ENCODE measurements at regions of chrX and their contacts with region 1.

Region 1: GRCh38 chrX:153927922-153928760 is 2.1 kb upstream of the ARHGAP4 start:
- DNase-seq: peak; percentile 96
- H3K4me3 Mint-ChIP-seq: peak overlapping the region; percentile 86
- H3K27ac Mint-ChIP-seq: peak overlapping the region; percentile 98
- H3K4me1 Mint-ChIP-seq: peaks cover 35% of the 10 kb centered on the region
- H3K27me3 Mint-ChIP-seq: no peaks in the 10 kb centered on the region

Region 2: GRCh38 chrX:153539171-153539978 is 388.8 kb before region 1 on chrX:
- CTCF ChIA-PET with region 1: no interaction called
- POLR2A ChIA-PET with region 1: no interaction called
- intact Hi-C with region 1: no loop called
- DNase-seq: peak; percentile 69
- H3K4me3 Mint-ChIP-seq: no peak overlapping the region
- H3K27ac Mint-ChIP-seq: no peak overlapping the region
- H3K4me1 Mint-ChIP-seq: no peaks in the 10 kb centered on the region
- H3K27me3 Mint-ChIP-seq: peaks cover 2% of the 10 kb centered on the region

Region 3: DNA sequence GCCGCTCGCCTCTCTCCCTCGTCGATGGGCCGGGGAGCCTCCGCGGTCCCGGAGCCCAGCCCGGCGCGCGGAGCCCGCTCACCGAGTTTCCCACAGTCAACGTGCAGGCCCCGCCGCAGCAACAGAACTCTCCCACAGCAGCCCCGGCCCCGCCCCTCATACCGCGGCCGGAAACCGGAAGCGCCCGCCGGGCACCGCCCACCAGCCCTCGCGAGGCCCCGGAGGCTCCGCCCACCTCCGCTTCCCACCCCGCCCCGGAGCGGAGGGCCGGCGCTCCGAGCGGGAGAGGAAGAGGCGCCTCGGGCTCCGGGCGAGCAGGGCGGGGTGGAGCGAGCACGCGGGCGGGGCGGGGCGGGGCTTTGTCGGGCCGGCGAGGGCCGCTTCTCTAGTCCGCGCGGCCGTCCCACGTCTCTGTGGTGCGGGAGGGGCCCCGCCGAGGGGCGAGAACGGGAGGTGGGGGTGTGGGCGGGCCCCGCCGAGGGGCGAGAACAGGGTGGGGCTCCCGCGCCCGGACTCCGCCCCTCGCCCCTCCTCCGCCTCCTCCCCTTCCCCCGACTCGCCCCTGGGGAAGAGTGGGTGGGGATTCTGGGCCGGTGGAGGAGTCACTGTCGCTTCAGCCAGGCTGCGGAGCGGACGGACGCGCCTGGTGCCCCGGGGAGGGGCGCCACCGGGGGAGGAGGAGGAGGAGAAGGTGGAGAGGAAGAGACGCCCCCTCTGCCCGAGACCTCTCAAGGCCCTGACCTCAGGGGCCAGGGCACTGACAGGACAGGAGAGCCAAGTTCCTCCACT is 203.7 kb before region 1 on chrX and contains the starts of genes ABCD1 and BCAP31:
- CTCF ChIA-PET with region 1: no interaction called
- POLR2A ChIA-PET with region 1: interaction called, 3 read pairs
- intact Hi-C with region 1: loop called (anchors 5 kb)
- DNase-seq: peak; percentile 91
- H3K4me3 Mint-ChIP-seq: peak within 1 kb of the TSS; percentile 86
- H3K27ac Mint-ChIP-seq: peak within 1 kb of the TSS; percentile 88
- H3K4me1 Mint-ChIP-seq: peaks cover 24% of the 10 kb centered on the region
- H3K27me3 Mint-ChIP-seq: no peaks in the 10 kb centered on the region
- total RNA-seq, gene ABCD1: 4.8 TPM
- total RNA-seq, gene BCAP31: 119 to 121 TPM

Region 4: DNA sequence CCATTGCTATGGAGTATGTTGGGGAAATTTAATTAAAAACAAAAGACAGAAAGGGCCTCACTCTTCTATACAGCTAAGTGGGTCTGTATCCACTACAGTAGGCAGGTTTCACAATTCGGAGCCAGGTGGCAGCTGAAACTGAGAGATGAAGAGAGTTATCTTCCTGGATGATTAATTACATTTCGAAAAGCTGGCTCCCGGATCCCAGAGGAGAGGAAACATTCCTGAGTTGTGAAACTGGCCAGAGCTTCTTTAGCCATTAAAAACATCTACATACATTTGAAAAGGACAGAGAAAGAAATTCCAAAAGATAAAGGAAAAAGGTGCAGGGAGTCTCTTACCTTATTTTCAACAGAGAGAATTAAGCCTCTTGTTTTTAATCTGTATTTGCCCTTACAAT is 82.3 kb before region 1 on chrX:
- CTCF ChIA-PET with region 1: no interaction called
- POLR2A ChIA-PET with region 1: no interaction called
- intact Hi-C with region 1: no loop called
- DNase-seq: no peak
- H3K4me3 Mint-ChIP-seq: no peak overlapping the region
- H3K27ac Mint-ChIP-seq: no peak overlapping the region
- H3K4me1 Mint-ChIP-seq: no peaks in the 10 kb centered on the region
- H3K27me3 Mint-ChIP-seq: peaks cover 6% of the 10 kb centered on the region

Region 5: DNA sequence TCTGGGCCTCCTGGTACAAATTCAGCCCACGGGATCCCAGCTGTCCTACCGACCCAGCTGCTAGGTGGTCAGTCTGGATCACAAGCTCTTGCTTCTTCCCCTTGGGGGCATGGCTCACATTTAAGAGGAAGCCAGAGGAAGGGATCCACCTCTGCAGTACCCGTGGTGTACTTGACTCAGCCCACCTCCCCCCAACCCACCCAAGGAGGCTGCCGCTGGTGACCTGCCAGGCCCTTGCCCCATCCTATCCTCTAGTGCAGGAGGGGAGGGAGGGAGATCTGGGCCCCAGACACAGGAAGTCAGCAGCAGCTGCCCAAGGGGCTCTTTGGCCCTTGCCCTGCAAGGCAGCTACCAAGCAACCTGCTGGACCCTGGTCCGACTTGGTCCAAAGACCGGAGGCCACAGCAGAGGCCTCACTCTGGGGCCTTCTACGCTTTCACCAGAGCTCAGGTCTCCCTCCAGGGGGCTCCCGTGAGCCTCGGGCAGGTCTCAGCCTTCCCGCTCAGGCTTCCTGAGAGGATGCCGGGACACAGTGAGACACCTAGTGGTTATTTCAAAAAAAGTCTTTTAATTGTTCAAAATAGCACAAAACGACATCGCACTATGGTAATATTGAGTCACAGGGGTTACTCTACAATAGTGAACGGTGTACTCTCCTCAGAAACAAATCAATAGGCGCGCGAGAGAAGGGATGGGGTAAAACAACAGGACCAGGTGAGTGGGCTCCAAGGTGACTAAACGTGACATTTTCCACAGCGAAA is 19.0 kb after region 1 on chrX:
- CTCF ChIA-PET with region 1: interaction called, 93 read pairs
- POLR2A ChIA-PET with region 1: interaction called, 21 read pairs
- intact Hi-C with region 1: loop called (anchors 2 kb)
- DNase-seq: peak; percentile 85
- H3K4me3 Mint-ChIP-seq: no peak overlapping the region
- H3K27ac Mint-ChIP-seq: peak overlapping the region; percentile 82
- H3K4me1 Mint-ChIP-seq: peaks cover 7% of the 10 kb centered on the region
- H3K27me3 Mint-ChIP-seq: no peaks in the 10 kb centered on the region

Region 6: DNA sequence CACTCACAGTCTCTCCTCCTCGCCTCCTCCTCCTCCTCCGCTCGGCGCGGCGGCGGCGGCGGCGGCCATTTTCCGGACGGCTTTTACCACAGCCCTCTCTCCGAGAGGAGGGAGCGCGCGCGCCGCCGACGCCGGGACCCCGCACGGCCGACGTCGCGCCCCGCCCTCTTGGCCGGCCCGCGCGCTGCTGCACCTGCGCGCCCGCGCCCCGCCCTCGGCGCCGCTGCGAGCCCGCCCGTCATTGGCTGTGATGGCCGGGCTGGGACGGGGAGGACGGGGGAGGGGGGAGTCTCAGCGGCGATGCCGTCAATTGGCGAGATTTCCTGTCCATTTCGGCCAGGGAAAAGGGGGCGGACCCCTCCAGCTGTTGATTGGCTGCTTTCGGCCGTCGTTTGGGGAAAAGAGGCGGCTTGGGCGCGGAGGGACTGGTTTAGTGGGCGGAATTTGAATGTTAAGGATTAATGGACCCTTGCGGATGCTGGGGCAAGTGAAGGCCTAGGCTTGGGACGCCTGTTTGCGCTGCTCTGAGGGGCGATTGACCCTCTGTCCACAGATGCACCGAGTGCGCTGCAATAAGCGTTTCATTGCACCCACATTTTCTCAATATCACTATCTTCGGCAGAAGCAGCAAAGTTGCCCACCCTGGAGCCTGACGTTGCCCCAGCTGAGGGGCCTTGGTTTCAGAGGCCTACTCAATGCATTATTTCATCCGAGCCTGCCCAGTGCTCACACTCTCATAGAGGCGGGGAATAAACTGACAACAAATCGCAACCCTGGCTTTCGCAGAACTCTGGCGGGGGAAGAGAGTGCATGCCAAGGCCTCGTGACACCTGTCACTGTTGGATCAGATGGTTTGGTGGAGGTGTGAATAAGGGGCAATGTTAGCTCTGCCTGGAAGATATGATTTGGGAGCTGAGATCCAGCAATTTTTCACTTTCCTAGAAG is 169.7 kb after region 1 on chrX and contains the start of gene MECP2:
- CTCF ChIA-PET with region 1: interaction called, 3 read pairs
- POLR2A ChIA-PET with region 1: no interaction called
- intact Hi-C with region 1: loop called (anchors 5 kb)
- DNase-seq: peak; percentile 93
- H3K4me3 Mint-ChIP-seq: peak within 1 kb of the TSS; percentile 98
- H3K27ac Mint-ChIP-seq: peak within 1 kb of the TSS; percentile 98
- H3K4me1 Mint-ChIP-seq: peaks cover 57% of the 10 kb centered on the region
- H3K27me3 Mint-ChIP-seq: no peaks in the 10 kb centered on the region
- total RNA-seq, gene MECP2: 50.8 to 51.0 TPM

Region 7: DNA sequence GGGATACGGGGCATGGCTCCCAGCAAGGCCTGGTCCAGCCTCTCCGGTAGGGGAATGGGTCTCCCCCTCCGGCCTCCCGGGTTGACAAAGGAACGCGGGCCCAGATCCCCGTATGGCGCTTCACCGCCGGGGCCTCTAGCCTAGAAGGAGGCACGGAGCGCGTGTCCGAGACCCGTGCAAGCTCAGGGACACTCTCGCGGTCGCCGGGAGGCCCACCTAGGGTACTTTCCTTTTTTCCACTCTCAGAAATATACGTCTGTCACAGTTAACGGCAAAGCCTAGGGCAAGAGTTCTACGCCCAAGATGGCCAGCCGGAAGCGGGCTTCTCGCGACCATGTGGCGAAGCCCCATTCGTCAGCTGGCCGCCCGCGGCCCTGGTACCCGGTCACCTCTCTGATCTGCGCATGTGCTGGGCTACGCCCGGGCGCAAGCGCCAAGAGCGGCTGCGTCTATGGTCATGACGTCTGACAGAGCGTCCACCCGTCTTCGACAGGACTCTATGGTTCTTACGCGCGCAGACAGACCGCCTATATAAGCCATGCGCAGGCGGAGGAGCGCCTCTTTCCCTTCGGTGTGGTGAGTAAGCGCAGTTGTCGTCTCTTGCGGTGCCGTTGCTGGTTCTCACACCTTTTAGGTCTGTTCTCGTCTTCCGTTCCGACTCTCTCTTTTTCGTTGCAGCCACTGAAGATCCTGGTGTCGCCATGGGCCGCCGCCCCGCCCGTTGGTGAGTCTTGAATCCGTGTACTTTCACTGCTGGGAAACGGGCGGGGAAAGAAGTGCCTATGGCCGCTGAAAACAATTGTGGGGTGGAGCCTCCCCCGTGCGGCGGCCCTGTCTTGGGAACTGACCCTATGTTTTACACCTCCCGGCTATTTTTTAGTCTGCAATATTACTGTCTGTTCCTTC is 469.9 kb after region 1 on chrX and contains the start of gene RPL10:
- CTCF ChIA-PET with region 1: no interaction called
- POLR2A ChIA-PET with region 1: no interaction called
- intact Hi-C with region 1: loop called (anchors 5 kb)
- DNase-seq: peak; percentile 95
- H3K4me3 Mint-ChIP-seq: peak within 1 kb of the TSS; percentile 91
- H3K27ac Mint-ChIP-seq: peak within 1 kb of the TSS; percentile 100
- H3K4me1 Mint-ChIP-seq: peaks cover 7% of the 10 kb centered on the region
- H3K27me3 Mint-ChIP-seq: no peaks in the 10 kb centered on the region
- total RNA-seq, gene RPL10: 3,597 to 3,654 TPM